GM10248 (cell line): ENCODE measurements at regions of chr3 and their contacts with region 1.

Region 1: DNA sequence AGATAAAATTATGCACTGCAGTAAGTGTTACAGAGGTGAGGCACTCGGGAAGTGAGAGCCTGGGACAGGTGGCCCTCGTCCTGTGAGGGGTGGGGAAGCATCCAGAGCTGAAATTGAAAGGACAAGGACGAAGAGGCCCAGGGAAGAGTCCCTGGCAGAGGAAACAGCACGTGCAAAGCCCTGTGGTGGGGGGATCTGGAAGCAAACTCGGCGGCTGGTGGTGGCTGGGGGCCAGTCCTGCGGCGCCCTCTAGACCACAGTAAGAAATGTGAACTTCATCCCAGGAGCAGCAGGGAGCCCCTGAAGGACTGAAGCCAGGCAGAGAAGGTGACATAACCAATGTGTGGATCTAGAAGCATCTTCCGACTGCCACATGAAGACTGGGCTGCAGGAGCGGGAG is 42.8 kb downstream of the GRIP2 start:
- DNase-seq: no peak
- CTCF ChIP-seq: no peak

Region 2: GRCh38 chr3:14480207-14481025 is 16.9 kb before region 1 on chr3:
- CTCF ChIA-PET with region 1: no interaction called
- POLR2A ChIA-PET with region 1: no interaction called
- DNase-seq: no peak
- CTCF ChIP-seq: no peak

Region 3: DNA sequence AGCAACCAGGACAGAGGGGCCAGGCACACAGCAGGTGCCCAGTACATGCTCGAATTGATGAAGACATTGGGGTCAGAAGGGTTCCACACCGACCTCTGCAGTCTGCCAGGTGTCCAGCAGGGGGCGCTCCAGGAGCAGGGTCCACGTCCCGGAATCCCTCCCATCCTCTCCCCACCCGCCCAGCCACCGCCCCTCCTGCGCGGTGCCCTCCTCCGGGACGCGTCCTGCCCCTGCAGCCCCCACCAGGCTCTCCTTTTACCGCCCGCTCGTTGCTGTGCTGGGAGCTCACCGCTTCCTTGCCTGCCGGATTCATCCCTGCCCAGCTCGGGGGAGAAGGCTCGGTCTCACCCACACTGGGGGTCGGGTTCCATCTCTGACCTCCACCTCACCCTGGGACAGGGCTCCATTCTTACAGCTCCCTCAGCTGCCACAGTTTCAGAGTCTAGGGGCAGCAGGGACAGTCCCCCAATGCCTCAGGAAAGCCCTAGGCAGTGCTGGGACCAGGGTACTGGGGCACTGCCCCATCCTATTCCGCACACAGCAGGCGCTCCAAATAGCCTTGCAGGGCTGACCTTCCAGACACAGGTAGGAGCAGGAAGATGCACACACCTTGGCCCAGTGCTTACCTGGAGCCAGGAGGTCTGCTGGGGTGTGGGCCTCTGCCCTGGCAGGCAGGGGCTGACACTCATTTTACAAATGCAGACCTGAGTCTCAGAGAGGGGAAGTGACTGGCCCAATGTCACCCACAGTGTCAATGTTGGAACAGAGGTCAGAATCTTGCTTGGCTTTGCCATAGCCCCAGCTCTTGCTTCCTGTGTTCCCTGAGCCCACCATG is 11.9 kb after region 1 on chr3:
- CTCF ChIA-PET with region 1: interaction called, 26 read pairs
- POLR2A ChIA-PET with region 1: no interaction called
- DNase-seq: peak; percentile 87
- CTCF ChIP-seq: peak; percentile 93

Region 4: GRCh38 chr3:14616606-14617507 is 119.5 kb after region 1 on chr3:
- CTCF ChIA-PET with region 1: no interaction called
- POLR2A ChIA-PET with region 1: no interaction called
- DNase-seq: no peak
- CTCF ChIP-seq: no peak